Activated T-helper 2 cell treated with anti-CD3 and anti-CD28 coated beads, Interferon-gamma antibody, Interleukin-2, Interleukin-4, amounts not matched to agents 10 μg/mL and 5 μg/mL and 100 μg/mL, durations not matched to agents 14 hours and 24 hours and 36 hours (primary cell): ENCODE measurements at regions of chr3 and their contacts with region 1.

Region 1: GRCh38 chr3:12868039-12869034 is 27.0 kb upstream of the RPL32 start:
- DNase-seq: peak; percentile 38
- H3K4me3 Mint-ChIP-seq: peak overlapping the region; percentile 75
- H3K27ac Mint-ChIP-seq: peak overlapping the region; percentile 25
- H3K4me1 Mint-ChIP-seq: peaks cover 13% of the 10 kb centered on the region
- H3K27me3 Mint-ChIP-seq: peaks cover 14% of the 10 kb centered on the region

Region 2: DNA sequence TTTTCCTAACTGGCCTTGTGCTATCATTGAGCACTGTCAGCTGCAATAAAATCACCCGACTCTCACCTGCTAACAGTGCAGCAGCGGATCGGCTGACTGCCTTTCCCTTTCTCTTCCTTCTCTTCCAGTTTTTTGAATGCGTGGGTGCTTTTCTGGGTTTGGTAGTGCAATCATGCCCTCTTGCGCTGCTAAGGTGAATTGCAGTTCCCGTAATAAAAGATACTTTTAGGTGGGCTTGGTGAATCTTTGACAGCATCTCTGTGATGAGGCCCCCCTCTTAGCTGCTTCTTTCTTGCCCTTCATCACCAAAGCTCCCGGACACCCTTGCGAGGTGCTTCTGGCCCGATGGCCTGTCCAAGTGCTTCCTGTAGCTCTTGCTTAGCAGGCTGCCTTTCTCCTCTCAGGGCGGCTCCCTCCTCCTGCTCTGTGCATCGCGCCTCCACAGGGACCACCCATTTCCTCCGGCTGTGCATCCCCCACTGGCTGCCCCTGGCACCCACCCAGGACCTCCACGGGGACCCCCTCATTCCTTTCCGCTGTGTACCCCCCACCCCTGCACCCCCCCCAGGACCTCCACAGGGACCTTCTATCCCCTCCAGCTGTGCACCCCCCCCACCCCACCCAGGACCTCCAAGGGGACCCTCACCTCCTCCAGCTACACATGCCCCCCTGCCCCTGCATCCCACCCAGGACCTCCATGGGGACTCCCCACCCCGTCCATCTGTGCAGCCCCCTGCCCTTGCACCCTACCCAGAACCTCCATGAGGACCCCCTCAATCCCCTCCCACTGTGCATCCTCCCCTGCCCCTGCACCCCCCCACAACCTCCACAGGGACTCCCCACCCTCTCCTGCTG is 23.9 kb after region 1 on chr3:
- intact Hi-C with region 1: loop called (anchors 1 kb)
- DNase-seq: peak; percentile 20
- H3K4me3 Mint-ChIP-seq: no peak overlapping the region
- H3K27ac Mint-ChIP-seq: no peak overlapping the region
- H3K4me1 Mint-ChIP-seq: peaks cover 4% of the 10 kb centered on the region
- H3K27me3 Mint-ChIP-seq: peaks cover 24% of the 10 kb centered on the region

Region 3: DNA sequence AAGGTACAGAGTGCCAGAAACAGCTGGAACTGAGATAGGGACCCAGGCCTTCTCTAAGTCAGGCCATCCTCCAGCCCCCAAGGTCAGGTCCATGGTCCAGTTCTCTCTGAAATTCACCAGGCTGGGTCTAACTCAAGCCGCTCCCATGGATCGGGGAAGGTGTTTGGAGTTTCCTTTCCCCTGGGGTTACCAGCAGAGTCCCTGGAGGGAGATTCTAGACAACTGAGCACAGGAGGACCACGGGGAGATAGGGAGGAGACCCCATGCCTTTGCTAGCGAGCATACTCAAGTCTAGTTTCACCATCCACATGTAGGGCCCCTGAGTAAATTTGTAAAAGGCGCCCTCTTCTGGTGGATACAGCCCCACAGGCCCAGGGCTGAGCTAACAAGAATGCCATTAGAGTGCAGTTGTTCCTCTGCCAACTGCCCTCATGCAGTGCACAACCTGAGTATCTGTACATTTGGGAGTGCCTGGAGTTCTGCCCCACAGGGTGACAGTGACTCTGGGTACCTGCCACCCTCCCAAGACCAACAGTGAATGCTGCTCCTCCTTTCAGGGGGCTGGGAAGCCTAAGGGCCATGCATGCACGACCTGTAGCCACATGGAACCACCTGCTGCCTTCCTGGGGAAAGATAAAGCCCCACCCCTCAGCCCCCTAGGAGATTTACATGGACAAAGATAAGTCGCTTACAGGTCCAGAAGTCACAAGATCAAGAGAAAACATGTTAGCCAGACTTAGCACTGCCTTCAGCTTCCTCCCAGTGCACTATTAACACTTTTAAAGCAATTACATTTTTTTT is 115.9 kb after region 1 on chr3:
- intact Hi-C with region 1: loop called (anchors 2 kb)
- DNase-seq: peak; percentile 44
- H3K4me3 Mint-ChIP-seq: no peak overlapping the region
- H3K27ac Mint-ChIP-seq: no peak overlapping the region
- H3K4me1 Mint-ChIP-seq: peaks cover 18% of the 10 kb centered on the region
- H3K27me3 Mint-ChIP-seq: no peaks in the 10 kb centered on the region